Adrenal gland (tissue), 19 donors: ENCODE measurements at regions of chr16 and their contacts with region 1.

Region 1: GRCh38 chr16:4330277-4330874 is 14.5 kb downstream of the GLIS2 start:
- DNase-seq: peak; percentile 77 to 91 (median 84)
- H3K4me3 ChIP-seq: no peak overlapping the region
- H3K27ac ChIP-seq: no peak overlapping the region
- H3K4me1 ChIP-seq: peaks cover 23 to 39% of the 10 kb centered on the region in 2 donors
- H3K27me3 ChIP-seq: no peaks in the 10 kb centered on the region
- CTCF ChIP-seq: peak; percentile 87 to 98 (median 96)
- POLR2A ChIP-seq: no peak

Region 2: DNA sequence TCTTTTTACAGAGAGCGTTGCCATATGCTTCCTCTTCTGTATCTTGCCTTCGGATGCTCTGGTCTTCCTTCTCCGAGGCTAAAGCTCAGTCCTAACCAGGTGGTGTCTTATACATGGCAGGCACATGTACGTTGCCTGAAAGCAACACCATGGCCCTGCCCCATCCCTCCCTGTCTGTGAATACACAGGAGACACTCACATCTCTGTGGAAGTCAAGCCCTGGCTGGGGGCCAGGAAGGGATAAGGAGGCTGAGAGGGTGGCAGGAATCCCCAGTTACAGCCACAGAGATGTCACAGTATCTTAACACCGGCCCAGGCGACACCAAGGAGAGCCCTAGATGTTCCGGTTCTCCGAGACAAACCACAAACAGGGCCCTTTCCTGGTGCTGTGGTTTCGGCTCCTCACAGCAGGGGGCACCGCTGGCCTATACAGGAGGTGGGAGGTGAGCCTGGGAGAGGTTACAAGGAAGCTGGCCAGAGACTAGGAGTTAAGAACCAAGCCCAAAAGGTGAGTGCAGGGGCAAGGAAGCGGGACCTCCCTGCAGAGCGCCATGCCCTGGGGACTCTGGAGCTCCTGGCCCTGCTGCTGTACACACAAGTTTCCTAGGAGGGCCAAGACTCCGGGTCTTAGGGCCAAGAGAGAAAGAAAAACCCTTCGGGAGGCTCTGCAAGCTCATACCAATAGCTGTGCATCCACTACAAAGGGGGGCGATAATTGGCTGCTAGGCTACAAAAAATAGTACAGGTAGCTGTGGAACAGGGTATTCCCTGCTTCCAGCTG is 130.2 kb before region 1 on chr16:
- intact Hi-C with region 1: loop called in 1 of 2 experiments (anchors 10 kb)
- DNase-seq: peak; percentile 70 to 86 (median 83)
- H3K4me3 ChIP-seq: no peak overlapping the region
- H3K27ac ChIP-seq: no peak overlapping the region
- H3K4me1 ChIP-seq: no peaks in the 10 kb centered on the region
- H3K27me3 ChIP-seq: no peaks in the 10 kb centered on the region
- CTCF ChIP-seq: peak; percentile 63 to 92 (median 87)
- POLR2A ChIP-seq: no peak

Region 3: DNA sequence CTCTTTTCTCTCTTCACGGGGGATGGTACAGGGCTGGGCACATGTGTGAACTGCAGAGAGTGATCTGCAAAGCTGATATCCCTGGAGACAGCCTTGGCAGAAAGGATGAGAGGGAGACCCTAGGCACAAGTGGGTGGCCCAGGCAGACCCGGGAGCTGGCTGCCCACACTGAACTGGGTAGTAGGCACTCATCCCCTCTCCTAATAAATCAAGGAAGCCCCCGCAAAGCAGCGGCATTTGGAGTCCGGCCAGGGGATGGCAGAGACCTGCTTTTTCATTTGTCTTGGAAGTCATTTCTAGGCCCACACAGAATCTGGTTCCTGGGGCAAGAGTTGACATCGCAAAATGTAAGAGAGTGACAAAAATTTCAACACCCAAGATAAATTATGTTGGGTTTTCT is 54.5 kb before region 1 on chr16:
- intact Hi-C with region 1: loop called in 1 of 2 experiments (anchors 5 kb)
- DNase-seq: no peak
- H3K4me3 ChIP-seq: no peak overlapping the region
- H3K27ac ChIP-seq: no peak overlapping the region
- H3K4me1 ChIP-seq: peaks cover 6 to 12% of the 10 kb centered on the region in 2 donors
- H3K27me3 ChIP-seq: no peaks in the 10 kb centered on the region
- CTCF ChIP-seq: no peak
- POLR2A ChIP-seq: no peak

Region 4: GRCh38 chr16:4288148-4288921 is 42.0 kb before region 1 on chr16:
- intact Hi-C with region 1: loop called (anchors 5 kb)
- DNase-seq: peak; percentile 55 to 82 (median 70)
- H3K4me3 ChIP-seq: no peak overlapping the region
- H3K27ac ChIP-seq: no peak overlapping the region
- H3K4me1 ChIP-seq: peaks cover 0 to 17% of the 10 kb centered on the region in 2 donors
- H3K27me3 ChIP-seq: no peaks in the 10 kb centered on the region
- CTCF ChIP-seq: peak; percentile 79 to 90 (median 82)
- POLR2A ChIP-seq: no peak